Gastrocnemius medialis (tissue), 4 donors: ENCODE measurements at regions of chr18 and their contacts with region 1.

Region 1: DNA sequence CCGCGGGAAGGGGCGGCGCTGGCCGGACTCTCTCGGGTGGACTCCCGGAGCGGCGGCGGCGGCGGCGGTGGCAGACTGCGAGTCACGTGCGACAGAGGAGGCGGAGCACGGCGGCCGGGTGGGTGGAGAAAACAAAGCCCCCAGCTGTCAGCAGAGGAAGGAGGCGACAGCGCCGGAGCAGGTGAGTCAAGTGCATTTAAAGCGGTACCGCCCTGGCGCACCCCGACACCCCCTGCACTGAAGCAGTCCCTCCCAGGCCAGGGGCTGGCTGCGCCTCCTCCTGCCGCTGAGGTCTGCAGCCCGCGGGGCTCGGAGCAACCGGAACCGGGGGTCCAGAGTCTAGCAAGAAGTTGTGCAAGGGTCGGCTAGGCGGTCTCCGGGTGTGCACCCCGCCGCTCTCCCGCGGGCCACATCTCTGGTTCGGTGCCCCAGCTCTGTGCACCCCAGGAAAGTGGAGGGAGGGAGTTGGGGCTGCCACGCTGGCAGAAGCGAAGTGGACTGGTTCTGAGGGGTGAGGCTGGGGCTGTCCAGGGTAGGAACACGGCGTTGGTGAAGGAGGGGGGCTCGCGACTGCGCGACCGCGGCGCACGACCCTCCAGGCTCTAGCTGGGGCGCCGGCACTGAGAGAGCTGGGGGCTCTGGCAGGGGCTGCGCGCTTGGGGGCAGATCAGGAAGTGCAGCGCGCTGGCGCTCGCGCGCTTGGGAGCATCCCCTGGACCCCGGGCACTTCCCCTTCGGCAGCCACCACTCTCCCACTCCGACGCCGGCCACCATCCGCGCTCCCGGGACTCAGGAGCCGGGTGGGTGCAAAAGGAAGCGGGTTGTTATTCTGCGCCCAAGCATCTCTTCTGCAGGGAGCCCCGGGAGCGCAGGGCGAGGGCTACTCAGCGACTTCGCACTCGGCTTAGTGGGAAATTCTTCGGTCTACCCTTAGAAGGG is 64.0 kb upstream of the MAPRE2 start:
- DNase-seq: peak; percentile 87 to 92
- ATAC-seq: peak; percentile 54 to 61
- H3K4me3 ChIP-seq: peak overlapping the region; percentile 77 to 97 (median 89)
- H3K27ac ChIP-seq: peak overlapping the region; percentile 93 to 97 (median 96)
- H3K4me1 ChIP-seq: peaks cover 38 to 46% of the 10 kb centered on the region in 2 donors
- H3K27me3 ChIP-seq: no peaks in the 10 kb centered on the region
- CTCF ChIP-seq: no peak
- POLR2A ChIP-seq: peak; percentile 86 to 95

Region 2: DNA sequence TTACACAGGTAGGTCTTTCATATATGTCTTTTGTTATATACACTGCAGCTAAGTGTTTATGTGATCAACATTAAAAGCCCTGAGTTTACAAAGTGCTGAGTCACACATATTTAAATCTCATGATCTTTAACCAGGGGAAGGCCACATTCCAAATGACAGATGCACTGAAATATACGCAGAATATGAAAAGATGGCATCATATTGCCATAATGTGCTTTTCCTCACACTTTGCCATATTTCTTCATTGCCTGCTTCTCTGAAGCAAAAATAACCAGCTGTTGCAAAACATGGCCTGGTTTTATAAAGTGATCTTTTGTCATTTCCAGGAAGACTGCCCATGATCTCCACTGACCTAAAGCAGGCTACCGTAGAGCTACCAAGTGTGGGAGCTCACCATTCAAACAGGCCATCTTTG is 29.4 kb before region 1 on chr18:
- in situ Hi-C with region 1: no loop called
- intact Hi-C with region 1: loop called (anchors 2 kb)
- DNase-seq: peak; percentile 31 to 36
- ATAC-seq: peak; percentile 75 to 86
- H3K4me3 ChIP-seq: no peak overlapping the region
- H3K27ac ChIP-seq: peak overlapping the region; percentile 76 to 83 (median 80)
- H3K4me1 ChIP-seq: peaks cover 30 to 42% of the 10 kb centered on the region in 2 donors
- H3K27me3 ChIP-seq: no peaks in the 10 kb centered on the region
- CTCF ChIP-seq: no peak
- POLR2A ChIP-seq: no peak